ENCODE measurements at regions of chr1 and their contacts with region 1.

Region 1: GRCh38 chr1:37692078-37692833 is at the start of gene CDCA8:
- DNase-seq: peak; percentile 94 to 99 (median 98)
- ATAC-seq: peak; percentile 88
- H3K4me3 Mint-ChIP-seq: peak within 1 kb of the TSS; percentile 89 to 98 (median 96)
- H3K27ac Mint-ChIP-seq: peak within 1 kb of the TSS; percentile 84 to 98 (median 94)
- H3K4me1 Mint-ChIP-seq: peaks cover 23 to 47% (median 44%) of the 10 kb centered on the region in 4 donors
- H3K27me3 Mint-ChIP-seq: no peaks in the 10 kb centered on the region
- polyA plus RNA-seq, gene CDCA8: 0.40 to 2.0 (median 0.54) TPM

Region 2: GRCh38 chr1:37474046-37474759 is 218.1 kb before region 1 on chr1 and contains the start of gene ZC3H12A:
- POLR2A ChIA-PET with region 1: interaction called, 41 read pairs
- DNase-seq: peak; percentile 88 to 98 (median 92)
- ATAC-seq: peak; percentile 59
- H3K4me3 Mint-ChIP-seq: peak within 1 kb of the TSS; percentile 84 to 99 (median 96)
- H3K27ac Mint-ChIP-seq: peak within 1 kb of the TSS; percentile 91 to 99 (median 98)
- H3K4me1 Mint-ChIP-seq: peaks cover 47 to 69% (median 63%) of the 10 kb centered on the region in 4 donors
- H3K27me3 Mint-ChIP-seq: no peaks in the 10 kb centered on the region
- polyA plus RNA-seq, gene ZC3H12A: 1.5 to 10.0 (median 3.1) TPM

Region 3: DNA sequence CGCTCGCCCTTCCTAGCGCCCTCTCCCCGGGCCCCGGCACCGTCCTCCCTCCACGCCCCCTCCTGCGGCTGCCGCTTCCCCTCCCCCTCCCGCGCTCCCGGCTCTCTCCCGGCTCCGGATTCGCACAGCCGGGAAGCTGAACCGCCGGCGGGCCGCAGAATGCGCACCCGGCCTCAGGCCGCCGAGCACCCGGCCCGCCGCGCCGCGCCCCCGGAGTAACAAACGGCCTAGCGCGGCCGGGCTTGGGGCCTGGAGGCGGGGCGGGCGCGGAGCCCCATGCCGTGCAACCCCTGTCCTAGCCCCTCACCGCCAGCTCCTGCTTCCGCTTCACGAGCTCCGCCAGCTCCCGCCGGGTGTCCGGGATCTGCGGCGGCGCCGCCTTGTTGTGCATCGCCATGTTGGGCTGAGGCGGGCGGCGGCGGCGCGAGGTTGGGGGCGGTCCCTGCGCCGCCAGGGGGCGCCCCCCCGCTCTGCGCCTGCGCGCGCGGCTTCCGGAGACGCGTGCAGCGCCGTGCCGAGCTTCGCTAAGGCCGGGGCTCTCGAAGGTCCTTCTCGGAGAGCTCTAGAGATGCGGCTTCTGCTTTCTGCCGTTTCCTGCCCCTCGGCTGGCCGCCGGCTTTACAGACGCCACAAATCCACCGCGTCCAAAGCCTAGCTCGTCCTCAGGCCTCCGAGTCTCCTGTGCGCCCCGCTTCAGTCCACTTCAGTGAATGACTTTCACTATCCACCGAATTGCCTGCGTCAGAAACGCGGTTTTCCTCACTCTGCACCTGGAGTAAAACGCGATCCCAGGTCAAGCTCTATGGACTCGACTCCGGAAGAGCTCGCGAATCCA is 177.7 kb before region 1 on chr1 and contains the start of gene MEAF6:
- POLR2A ChIA-PET with region 1: interaction called, 11 read pairs
- DNase-seq: peak; percentile 70 to 94 (median 86)
- ATAC-seq: peak; percentile 90 to 91
- H3K4me3 Mint-ChIP-seq: peak within 1 kb of the TSS; percentile 89 to 99 (median 98)
- H3K27ac Mint-ChIP-seq: peak within 1 kb of the TSS; percentile 98 to 100 (median 99)
- H3K4me1 Mint-ChIP-seq: peaks cover 30 to 51% (median 49%) of the 10 kb centered on the region in 4 donors
- H3K27me3 Mint-ChIP-seq: no peaks in the 10 kb centered on the region
- polyA plus RNA-seq, gene MEAF6: 118 to 184 (median 154) TPM

Region 4: GRCh38 chr1:37553927-37554808 is 138.1 kb before region 1 on chr1 and contains the start of gene SNIP1:
- POLR2A ChIA-PET with region 1: interaction called, 10 read pairs
- DNase-seq: peak; percentile 73 to 96 (median 91)
- ATAC-seq: peak; percentile 95 to 99
- H3K4me3 Mint-ChIP-seq: peak within 1 kb of the TSS; percentile 97 to 100 (median 99)
- H3K27ac Mint-ChIP-seq: peak within 1 kb of the TSS; percentile 95 to 100 (median 98)
- H3K4me1 Mint-ChIP-seq: peaks cover 18 to 46% (median 45%) of the 10 kb centered on the region in 4 donors
- H3K27me3 Mint-ChIP-seq: peaks cover 0 to 10% (median 5%) of the 10 kb centered on the region in 5 donors
- polyA plus RNA-seq, gene SNIP1: 3.6 to 5.5 (median 3.7) TPM

Region 5: DNA sequence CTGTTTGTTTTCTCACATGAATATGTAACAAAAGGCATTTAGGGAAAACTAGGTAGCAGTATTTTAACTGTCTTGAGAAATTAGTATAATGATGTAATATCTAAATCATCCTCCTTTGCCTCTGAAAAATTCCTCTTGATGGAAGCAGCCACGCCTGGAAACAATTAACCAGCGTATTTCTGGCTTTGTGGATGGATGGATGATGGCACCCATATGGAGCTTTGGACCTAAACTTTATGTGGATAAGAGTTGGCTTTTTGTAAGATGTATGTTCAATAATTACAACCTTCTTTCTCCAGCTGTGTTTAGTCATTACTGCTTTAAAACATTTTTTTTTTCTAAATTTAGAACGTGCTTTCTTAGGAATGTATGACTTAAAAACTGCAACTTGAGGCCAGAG is 12.7 kb after region 1 on chr1:
- POLR2A ChIA-PET with region 1: no interaction called
- DNase-seq: no peak
- ATAC-seq: no peak
- H3K4me3 Mint-ChIP-seq: no peak overlapping the region
- H3K27ac Mint-ChIP-seq: no peak overlapping the region
- H3K4me1 Mint-ChIP-seq: no peaks in the 10 kb centered on the region
- H3K27me3 Mint-ChIP-seq: no peaks in the 10 kb centered on the region

Region 6: DNA sequence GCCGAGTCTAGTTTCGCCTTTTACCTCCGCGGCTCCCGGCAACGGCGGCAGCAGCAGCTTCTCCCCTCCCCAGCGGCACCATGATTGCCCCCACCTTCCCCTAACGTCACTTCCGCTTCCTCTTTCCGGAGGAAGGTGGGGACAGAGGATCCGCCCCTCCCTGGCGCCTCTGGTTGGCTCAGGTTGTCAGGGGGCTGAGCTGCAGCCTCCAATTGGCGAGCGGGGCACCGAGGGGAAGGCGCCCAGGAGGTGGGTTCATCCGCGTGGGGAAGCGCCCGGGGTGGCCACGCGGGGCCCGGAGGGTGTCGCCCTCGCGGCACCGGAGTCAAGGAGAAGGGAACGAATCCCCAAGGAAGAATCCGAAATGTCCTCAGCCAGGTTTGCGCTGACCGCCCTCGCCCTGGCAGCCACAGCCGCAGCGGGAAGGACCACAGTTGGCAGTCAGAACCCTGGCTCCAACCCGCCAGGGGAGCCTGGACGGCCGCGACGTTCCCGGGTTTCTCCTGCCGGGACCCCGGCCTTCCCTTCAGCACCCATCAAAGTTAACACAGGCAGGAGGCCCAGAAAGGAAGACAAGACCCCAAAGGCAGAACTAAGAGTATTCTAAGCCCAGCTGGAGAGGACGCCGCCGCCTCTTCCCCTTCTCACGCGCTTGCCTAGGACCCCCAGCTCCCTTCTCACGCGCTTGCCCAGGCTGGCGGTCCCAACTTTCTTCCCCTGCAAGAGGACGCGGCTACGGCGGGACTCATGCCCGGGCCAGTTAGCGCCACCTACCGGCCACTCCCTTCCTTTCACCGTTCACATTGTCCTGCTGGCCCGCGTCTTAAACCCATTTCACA is 167.5 kb after region 1 on chr1 and contains the start of gene MTF1:
- POLR2A ChIA-PET with region 1: interaction called, 27 read pairs
- DNase-seq: peak; percentile 90 to 99 (median 97)
- ATAC-seq: peak; percentile 98
- H3K4me3 Mint-ChIP-seq: peak within 1 kb of the TSS; percentile 90 to 99 (median 97)
- H3K27ac Mint-ChIP-seq: peak within 1 kb of the TSS; percentile 68 to 97 (median 96)
- H3K4me1 Mint-ChIP-seq: peaks cover 14 to 37% (median 35%) of the 10 kb centered on the region in 4 donors
- H3K27me3 Mint-ChIP-seq: no peaks in the 10 kb centered on the region
- polyA plus RNA-seq, gene MTF1: 10.3 to 23.1 (median 14.5) TPM